ENCODE measurements at regions of chr12 and their contacts with region 1.

Region 1: GRCh38 chr12:31728917-31729640 is at the start of gene AMN1:
- DNase-seq: peak; percentile 99 to 100
- ATAC-seq: peak; percentile 98
- H3K4me3 ChIP-seq: peak within 1 kb of the TSS; percentile 79 to 88
- H3K27ac ChIP-seq: peak within 1 kb of the TSS; percentile 95 to 96
- H3K4me1 ChIP-seq: peaks cover 0 to 5% of the 10 kb centered on the region in 2 donors
- H3K27me3 ChIP-seq: no peaks in the 10 kb centered on the region
- total RNA-seq, gene AMN1: 11.7 to 12.4 TPM

Region 2: DNA sequence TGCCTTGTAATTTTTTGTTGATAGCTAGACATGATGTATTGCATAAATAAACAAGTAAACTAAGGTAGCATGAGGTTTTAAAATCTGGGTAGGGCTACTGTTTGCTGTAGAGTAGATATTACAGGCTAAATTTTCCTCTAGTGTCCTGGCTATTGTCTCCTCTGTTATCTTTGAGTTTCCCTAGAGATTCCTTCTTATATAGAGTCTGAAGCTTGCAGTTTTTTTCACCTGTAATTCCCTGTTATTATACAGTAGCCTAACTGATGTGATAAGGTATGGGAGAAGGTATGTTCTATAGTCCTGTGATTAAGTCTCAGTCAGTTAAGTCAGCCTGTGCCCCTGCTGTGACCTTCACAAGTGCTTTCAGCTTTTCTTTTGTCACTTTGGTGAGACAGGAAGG is 60.1 kb before region 1 on chr12:
- intact Hi-C with region 1: loop called (anchors 5 kb)
- DNase-seq: no peak
- ATAC-seq: no peak
- H3K4me3 ChIP-seq: no peak overlapping the region
- H3K27ac ChIP-seq: no peak overlapping the region
- H3K4me1 ChIP-seq: no peaks in the 10 kb centered on the region
- H3K27me3 ChIP-seq: no peaks in the 10 kb centered on the region

Region 3: GRCh38 chr12:31914927-31915326 is 185.8 kb after region 1 on chr12:
- intact Hi-C with region 1: no loop called
- DNase-seq: no peak
- ATAC-seq: no peak
- H3K4me3 ChIP-seq: no peak overlapping the region
- H3K27ac ChIP-seq: no peak overlapping the region
- H3K4me1 ChIP-seq: no peaks in the 10 kb centered on the region
- H3K27me3 ChIP-seq: no peaks in the 10 kb centered on the region

Region 4: DNA sequence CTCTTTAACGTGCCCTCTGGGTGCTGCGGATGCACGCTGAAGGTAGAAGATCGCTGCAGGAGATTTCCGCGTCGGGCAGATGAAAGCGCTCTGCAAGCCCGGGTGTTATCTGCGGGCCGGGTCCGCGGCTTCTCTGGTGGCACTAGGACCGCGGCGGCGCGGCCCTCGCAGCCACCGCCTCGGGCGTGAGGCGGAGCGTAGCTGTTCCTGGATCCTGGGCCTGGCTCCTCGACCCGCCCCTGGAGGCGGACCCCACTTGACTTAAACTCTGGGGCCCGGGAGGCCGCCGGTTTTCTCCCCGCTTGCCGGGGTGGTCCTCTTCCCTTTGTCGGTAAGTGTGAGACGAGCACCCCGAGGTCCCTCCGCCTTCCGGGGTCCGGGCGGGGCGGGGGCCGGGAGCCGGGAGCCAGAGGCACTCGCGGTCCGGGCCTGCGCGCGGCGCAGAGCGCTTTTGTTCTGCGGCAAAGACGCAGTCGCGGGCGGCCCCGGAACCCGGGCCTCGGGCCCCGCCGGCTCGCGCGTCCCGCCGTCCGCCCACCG is 230.2 kb after region 1 on chr12 and contains the start of gene RESF1:
- intact Hi-C with region 1: loop called (anchors 10 kb)
- DNase-seq: peak; percentile 94
- ATAC-seq: peak; percentile 98
- H3K4me3 ChIP-seq: peak within 1 kb of the TSS; percentile 73 to 86
- H3K27ac ChIP-seq: peak within 1 kb of the TSS; percentile 82 to 84
- H3K4me1 ChIP-seq: peaks cover 0 to 4% of the 10 kb centered on the region in 2 donors
- H3K27me3 ChIP-seq: no peaks in the 10 kb centered on the region
- total RNA-seq, gene RESF1: 49.4 to 65.2 TPM